ENCODE measurements at regions of chr19 and their contacts with region 1.

Region 1: GRCh38 chr19:18058208-18059030 is 28.3 kb downstream of the IL12RB1 start:
- DNase-seq: peak; percentile 87
- H3K4me3 ChIP-seq: no peak overlapping the region
- H3K27ac ChIP-seq: no peak overlapping the region
- H3K4me1 ChIP-seq: 0 out of 2 replicates have a peak, but pooled peaks cover 3% of the 10 kb centered on the region
- H3K27me3 ChIP-seq: no peaks in the 10 kb centered on the region

Region 2: DNA sequence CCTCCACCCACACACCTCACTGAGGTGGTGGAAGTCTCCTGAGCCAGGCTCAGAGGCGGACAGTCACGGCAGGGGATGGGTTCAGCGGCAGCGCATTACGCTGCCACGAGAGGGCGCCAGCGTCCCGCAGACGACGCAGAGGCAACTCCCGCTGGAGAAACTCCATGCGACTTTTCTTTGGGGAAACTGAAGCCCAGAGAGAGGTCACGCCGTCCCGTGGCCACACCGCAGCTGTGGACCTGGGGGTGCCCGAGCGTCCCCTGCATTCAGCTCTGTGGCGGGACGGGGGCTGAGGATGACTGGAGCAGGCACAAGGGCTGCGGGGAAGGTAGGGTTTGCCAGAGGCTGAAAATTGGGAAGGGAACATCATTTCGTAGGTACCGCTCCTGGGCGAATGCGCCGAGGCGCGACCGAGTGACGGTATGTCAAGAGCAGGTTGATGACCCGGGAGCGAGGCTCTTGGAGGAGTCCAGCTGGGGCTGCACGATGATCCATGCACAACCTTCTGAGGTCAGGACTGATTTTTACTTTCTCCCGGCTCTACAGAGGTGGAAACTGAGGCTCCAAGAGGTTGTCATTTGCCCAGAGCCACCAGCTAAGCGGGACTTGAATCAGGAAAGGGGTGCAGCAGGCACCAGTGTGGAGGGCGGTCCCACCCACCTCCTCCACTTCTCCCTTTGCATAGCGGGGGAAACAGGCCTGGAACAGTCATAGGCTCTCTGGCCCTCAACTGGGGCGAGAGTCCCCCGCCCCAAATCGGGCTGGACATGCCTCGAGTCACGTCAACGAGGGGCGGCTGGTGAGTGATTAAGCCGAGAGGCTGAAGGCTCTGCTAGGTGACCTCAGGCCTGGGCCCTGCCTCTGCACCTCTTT is 51.1 kb before region 1 on chr19:
- in situ Hi-C with region 1: loop called (anchors 10 kb)
- DNase-seq: peak; percentile 86
- H3K4me3 ChIP-seq: peak overlapping the region; percentile 71
- H3K27ac ChIP-seq: peak overlapping the region; percentile 19
- H3K4me1 ChIP-seq: peaks cover 8% of the 10 kb centered on the region
- H3K27me3 ChIP-seq: no peaks in the 10 kb centered on the region

Region 3: DNA sequence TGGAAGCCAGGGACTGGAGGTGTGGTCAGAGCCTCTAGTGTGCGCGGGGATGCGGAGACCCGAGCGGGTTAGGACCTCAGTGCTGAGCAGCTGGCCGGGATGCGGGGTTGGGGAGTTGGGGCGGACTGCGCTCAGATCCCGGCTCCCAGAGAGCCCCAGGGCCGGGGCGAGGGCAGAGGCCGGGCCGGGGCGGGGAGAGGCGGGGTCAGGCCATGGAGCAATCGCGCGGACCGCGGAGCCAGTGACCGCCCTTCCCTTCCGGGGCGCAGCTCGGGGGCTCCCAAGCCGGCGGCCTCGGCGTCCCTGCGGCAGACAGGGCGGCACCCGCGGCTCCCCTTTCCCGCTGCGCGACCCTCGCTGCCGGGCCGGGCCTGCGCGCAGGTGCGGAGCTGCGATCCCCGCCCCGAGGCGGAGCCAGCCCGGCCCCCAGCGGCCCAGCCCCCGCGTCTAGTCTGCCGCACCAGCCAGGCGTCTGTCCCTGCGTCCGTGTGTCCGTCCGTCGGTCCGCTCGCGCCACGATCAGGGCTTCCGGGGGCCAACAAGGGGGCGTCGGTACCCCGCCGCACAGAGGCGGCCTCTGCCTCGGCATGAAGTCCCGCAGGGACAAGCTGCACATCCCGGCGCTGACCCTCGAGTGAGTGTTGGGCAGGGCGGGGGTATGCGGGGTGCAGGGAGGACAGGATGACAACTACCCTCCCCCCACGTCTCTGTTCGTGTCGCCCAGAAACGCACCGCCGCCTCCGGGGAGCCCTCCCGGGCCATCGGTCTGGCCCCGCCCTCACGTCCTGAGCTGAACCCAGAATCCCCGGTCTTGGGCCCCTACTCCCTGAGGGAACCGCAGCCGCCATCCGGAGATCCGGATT is 51.5 kb after region 1 on chr19:
- in situ Hi-C with region 1: no loop called
- DNase-seq: peak; percentile 56
- H3K4me3 ChIP-seq: peak overlapping the region; percentile 79
- H3K27ac ChIP-seq: no peak overlapping the region
- H3K4me1 ChIP-seq: 0 out of 2 replicates have a peak, but pooled peaks cover 3% of the 10 kb centered on the region
- H3K27me3 ChIP-seq: no peaks in the 10 kb centered on the region

Measured in GM23248 (cell line).